BJ (cell line): ENCODE measurements at regions of chr1 and their contacts with region 1.

Region 1: GRCh38 chr1:171485375-171486047 is at the start of gene PRRC2C:
- DNase-seq: peak; percentile 91
- H3K4me3 ChIP-seq: peak within 1 kb of the TSS; percentile 99
- H3K27me3 ChIP-seq: no peaks in the 10 kb centered on the region
- CTCF ChIP-seq: peak; percentile 88
- polyA plus RNA-seq, gene PRRC2C: 27.2 and 39.5 TPM in 2 replicates

Region 2: GRCh38 chr1:171595324-171595723 is 109.8 kb after region 1 on chr1:
- CTCF ChIA-PET with region 1: no interaction called
- POLR2A ChIA-PET with region 1: interaction called, 11 read pairs
- DNase-seq: no peak
- H3K4me3 ChIP-seq: no peak overlapping the region
- H3K27me3 ChIP-seq: no peaks in the 10 kb centered on the region
- CTCF ChIP-seq: no peak